H1 (cell line): ENCODE measurements at regions of chr2 and their contacts with region 1.

Region 1: DNA sequence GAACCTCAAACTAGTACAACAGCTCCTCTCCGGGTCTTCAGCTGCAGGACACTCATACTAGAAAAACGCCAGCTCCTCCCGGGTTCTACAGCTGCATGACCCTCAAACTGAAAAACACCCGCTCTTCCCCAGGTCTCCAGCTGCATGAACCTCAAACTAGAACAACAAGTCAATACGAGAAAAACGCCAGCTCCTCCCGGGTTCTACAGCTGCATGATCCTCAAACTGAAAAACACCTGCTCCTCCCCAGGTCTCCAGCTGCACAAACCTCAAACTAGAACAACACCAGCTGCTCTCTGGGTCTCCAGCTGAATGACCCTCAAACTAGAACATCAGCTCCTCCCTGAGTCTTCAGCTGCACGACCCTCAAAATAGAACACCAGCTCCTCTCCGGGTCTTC is 315.0 kb upstream of the TFPI start:
- DNase-seq: no peak
- H3K4me3 ChIP-seq: no peak overlapping the region
- H3K27ac ChIP-seq: no peak overlapping the region
- H3K4me1 ChIP-seq: no peaks in the 10 kb centered on the region
- H3K27me3 ChIP-seq: no peaks in the 10 kb centered on the region
- CTCF ChIP-seq: no peak
- EP300 ChIP-seq: no peak
- POLR2A ChIP-seq: no peak
- RAD21 ChIP-seq: no peak

Region 2: DNA sequence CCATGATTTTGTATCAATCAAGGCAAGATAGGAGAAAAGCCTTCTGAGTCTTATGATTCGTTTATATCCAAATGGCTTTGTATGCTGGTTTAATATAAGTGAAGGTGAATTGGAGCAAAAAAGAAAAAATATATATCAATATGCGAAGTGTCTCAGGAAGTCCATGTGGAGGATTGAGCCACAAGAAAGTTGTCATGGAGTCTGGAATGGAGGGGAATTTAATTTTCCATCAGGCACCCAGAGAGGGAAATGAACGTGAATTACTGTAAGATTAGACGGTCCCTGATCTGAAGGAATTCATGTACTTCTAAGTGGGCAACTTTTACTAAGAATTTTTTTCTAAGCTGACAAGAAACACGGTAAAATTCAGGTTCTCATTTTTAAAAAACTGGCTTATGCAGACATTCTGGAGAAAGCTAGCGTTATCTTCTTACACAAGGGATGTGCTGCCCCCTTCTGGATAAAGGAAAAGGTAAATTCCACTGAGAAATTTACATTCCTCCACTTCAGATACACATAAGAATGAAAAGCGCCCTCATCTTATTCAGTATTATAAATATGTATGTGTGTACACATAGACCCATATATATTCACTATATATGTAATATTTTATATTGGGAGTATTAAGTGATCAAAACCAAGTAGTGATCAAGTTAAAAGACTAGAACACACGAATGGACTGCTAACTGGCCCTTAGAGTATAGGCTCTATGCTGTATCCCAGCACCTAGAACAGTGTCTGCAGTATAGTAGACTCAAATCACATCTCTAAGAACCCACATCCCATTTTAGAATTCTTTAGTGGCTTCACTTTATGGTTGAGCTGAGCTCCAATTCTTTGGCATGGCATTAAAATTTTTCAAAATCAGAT is 26.0 kb before region 1 on chr2:
- CTCF ChIA-PET with region 1: interaction called, 11 read pairs
- POLR2A ChIA-PET with region 1: no interaction called
- DNase-seq: no peak
- H3K4me3 ChIP-seq: no peak overlapping the region
- H3K27ac ChIP-seq: no peak overlapping the region
- H3K4me1 ChIP-seq: no peaks in the 10 kb centered on the region
- H3K27me3 ChIP-seq: peaks cover 0 to 1% (median 0%) of the 10 kb centered on the region in 4 experiments; a peak in 1 of 7 replicates
- CTCF ChIP-seq: peak in 2 of 3 experiments; percentile 58 to 64; a peak in 3 of 4 replicates
- EP300 ChIP-seq: no peak
- POLR2A ChIP-seq: no peak
- RAD21 ChIP-seq: peak; percentile 85 to 87

Region 3: GRCh38 chr2:187884003-187884402 is 14.8 kb after region 1 on chr2:
- CTCF ChIA-PET with region 1: no interaction called
- POLR2A ChIA-PET with region 1: no interaction called
- DNase-seq: no peak
- H3K4me3 ChIP-seq: no peak overlapping the region
- H3K27ac ChIP-seq: no peak overlapping the region
- H3K4me1 ChIP-seq: no peaks in the 10 kb centered on the region
- H3K27me3 ChIP-seq: no peaks in the 10 kb centered on the region
- CTCF ChIP-seq: no peak
- EP300 ChIP-seq: no peak
- POLR2A ChIP-seq: no peak
- RAD21 ChIP-seq: no peak